ENCODE measurements at regions of chr11 and their contacts with region 1.

Region 1: GRCh38 chr11:62542750-62543567 is 3.6 kb downstream of the AHNAK start:
- DNase-seq: peak; percentile 87
- H3K4me3 ChIP-seq: peak overlapping the region; percentile 100
- H3K27ac ChIP-seq: peak overlapping the region; percentile 100
- H3K4me1 ChIP-seq: peaks cover 98% of the 10 kb centered on the region
- H3K27me3 ChIP-seq: no peaks in the 10 kb centered on the region
- CTCF ChIP-seq: peak; percentile 99

Region 2: GRCh38 chr11:62394825-62395538 is 148.0 kb before region 1 on chr11:
- intact Hi-C with region 1: loop called (anchors 10 kb)
- DNase-seq: peak; percentile 79
- H3K4me3 ChIP-seq: peak overlapping the region; percentile 54
- H3K27ac ChIP-seq: peak overlapping the region; percentile 71
- H3K4me1 ChIP-seq: peaks cover 49% of the 10 kb centered on the region
- H3K27me3 ChIP-seq: no peaks in the 10 kb centered on the region
- CTCF ChIP-seq: peak; percentile 76

Region 3: DNA sequence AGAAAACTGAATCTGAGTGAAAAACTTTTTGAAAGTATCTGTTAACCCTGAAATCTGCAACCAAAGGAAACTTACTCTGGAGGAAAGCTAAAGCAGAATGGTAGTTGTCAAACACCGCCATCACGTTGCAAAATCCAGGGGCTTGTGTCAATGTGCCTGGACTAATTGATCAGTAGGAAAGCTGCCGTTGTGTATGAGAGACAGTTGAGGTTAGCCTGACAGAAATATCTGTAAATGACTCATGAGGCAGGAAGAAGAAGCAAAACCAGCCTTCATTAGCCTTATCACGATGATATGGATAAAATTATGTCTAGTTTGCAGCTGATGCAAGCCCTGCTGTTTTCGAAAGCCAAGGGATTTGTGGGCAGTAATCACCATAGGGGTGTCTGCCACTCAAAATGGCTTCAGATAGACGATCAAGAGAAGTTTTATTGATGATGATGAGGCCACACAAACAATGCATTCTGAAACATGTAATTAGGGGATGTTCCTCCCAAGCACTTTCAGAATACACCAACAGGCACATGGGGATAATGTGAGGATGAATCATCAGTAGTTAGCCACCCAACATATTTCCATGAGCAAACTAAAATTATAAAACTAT is 115.2 kb before region 1 on chr11:
- intact Hi-C with region 1: loop called (anchors 10 kb)
- DNase-seq: no peak
- H3K4me3 ChIP-seq: no peak overlapping the region
- H3K27ac ChIP-seq: no peak overlapping the region
- H3K4me1 ChIP-seq: peaks cover 9% of the 10 kb centered on the region
- H3K27me3 ChIP-seq: no peaks in the 10 kb centered on the region
- CTCF ChIP-seq: no peak

Region 4: DNA sequence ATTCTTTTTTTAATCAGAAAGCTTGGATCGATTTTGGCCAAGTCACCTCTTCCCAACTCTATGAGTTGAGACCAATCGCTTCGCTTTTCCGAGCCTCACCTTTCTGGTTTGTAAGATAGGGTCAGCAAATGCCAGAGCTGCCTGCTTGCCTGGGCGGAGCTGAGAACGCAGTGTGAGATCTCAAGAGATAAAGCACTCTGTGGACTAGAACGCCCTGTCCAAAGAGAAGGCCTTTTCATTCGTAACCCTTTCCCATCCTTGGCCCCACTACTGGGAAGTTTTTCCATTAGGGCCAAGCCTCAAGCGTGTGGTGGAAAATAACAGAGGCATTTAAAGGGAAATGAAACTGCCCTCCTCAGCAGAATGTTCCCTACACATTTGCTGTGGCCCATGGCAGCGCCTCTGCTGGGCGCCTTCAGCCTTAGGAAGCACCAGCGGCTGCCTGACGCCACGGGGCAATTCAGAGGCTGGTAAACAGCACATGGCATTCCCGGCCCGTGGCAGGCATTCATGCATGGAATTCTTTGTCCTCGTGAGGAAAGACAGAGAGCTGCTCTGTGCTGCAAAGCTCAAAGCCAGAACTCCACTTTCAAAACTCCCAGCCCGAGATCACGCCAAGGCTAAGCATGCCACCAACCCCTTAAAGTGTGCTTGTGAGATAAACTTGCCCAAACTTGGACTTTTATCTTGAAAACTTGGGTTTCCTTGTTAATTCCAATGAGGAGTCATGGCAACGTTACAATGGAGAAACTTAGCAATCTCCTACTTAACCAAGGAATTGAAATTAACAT is 34.5 kb before region 1 on chr11:
- intact Hi-C with region 1: loop called (anchors 5 kb)
- DNase-seq: peak; percentile 84
- H3K4me3 ChIP-seq: peak overlapping the region; percentile 39
- H3K27ac ChIP-seq: peak overlapping the region; percentile 85
- H3K4me1 ChIP-seq: peaks cover 68% of the 10 kb centered on the region
- H3K27me3 ChIP-seq: no peaks in the 10 kb centered on the region
- CTCF ChIP-seq: peak; percentile 66

Region 5: GRCh38 chr11:62880803-62881578 is 338.0 kb after region 1 on chr11 and contains the start of gene SLC3A2:
- intact Hi-C with region 1: no loop called
- DNase-seq: peak; percentile 88
- H3K4me3 ChIP-seq: peak within 1 kb of the TSS; percentile 90
- H3K27ac ChIP-seq: peak within 1 kb of the TSS; percentile 99
- H3K4me1 ChIP-seq: peaks cover 63% of the 10 kb centered on the region
- H3K27me3 ChIP-seq: no peaks in the 10 kb centered on the region
- CTCF ChIP-seq: peak; percentile 72
- total RNA-seq, gene SLC3A2: 35.0 TPM

Measured in left ventricle myocardium inferior (tissue), 1 donor.